Body of pancreas (tissue), 4 donors: ENCODE measurements at regions of chr4 and their contacts with region 1.

Region 1: GRCh38 chr4:48963042-48963679 is 22.9 kb upstream of the CWH43 start:
- DNase-seq: peak; percentile 74 to 82 (median 79)
- ATAC-seq: peak; percentile 93
- H3K4me3 ChIP-seq: no peak overlapping the region
- H3K27ac ChIP-seq: no peak overlapping the region
- H3K4me1 ChIP-seq: no peaks in the 10 kb centered on the region
- H3K27me3 ChIP-seq: no peaks in the 10 kb centered on the region
- CTCF ChIP-seq: peak; percentile 75 to 97 (median 95)
- POLR2A ChIP-seq: no peak

Region 2: DNA sequence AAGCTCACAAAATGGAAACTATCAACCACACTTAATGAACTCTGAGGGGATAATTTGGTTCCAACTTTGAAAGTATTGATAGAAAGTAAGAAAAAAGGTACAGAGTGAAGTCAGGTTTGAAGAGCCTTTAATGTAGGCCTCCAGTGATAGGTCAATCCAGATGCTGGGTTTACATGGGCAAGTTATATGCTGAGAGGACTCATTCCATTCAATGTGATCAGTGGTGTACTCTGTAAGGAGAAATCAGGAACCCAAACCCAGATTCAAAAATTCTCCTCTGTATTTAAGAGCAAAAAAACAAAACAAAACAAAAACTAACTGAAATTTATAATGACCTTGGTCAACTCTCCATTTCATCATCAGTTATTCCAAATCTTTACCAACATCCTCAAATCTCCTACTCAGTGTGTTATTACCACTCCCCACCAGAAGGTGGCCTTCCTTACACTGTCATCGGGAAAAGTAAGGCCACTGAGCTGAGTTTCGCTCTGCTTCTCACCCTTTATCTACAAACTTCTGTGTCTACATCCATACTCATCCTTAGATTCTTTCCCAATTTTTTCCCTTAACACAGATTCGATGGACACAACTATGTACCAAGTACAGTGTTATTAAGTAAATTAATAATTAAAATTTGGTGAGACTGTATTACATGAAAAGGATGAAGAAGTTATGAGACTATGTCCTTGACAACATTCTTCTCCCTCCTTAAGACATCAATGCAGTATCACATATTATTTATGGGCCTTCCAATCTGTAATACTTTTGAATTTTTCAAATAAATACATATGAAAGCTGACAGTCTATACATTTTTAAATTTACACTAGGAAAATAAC is 384.8 kb before region 1 on chr4:
- intact Hi-C with region 1: loop called (anchors 5 kb)
- DNase-seq: peak; percentile 64 to 75 (median 67)
- ATAC-seq: peak; percentile 86
- H3K4me3 ChIP-seq: no peak overlapping the region
- H3K27ac ChIP-seq: no peak overlapping the region
- H3K4me1 ChIP-seq: no peaks in the 10 kb centered on the region
- H3K27me3 ChIP-seq: no peaks in the 10 kb centered on the region
- CTCF ChIP-seq: peak; percentile 71 to 95 (median 86)
- POLR2A ChIP-seq: no peak